Ascending aorta (tissue), 2 donors: ENCODE measurements at regions of chr2 and their contacts with region 1.

Region 1: DNA sequence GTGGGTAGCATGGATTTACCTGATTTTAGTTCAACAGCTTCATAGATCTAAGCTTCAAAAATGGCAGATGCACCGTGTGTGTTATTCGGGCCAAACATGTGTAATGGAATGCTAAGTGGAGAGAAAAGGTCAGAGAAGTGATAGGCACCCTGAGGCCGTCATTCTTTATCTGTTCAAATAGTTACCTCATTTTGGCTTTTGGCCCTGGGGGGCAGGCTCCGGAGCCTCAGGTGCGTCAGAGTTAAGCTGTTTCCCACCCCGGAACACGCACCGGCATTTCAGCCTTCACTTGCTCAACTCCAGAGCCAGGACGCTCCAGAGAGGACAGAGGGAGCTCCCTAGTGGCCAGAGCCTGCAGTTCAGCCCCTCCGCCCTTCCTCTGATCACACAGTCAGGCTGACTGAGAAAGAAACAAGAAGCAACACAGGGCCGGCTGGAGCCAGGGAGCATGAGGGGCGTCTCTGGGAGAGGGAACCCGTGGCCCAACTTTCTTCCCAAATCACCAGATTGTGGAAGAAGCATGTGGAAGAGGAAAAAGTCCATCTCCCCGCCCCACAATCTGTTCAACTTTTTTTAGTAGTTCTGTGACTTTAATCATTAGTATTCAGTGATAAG is 135.2 kb upstream of the EPC2 start:
- DNase-seq: peak; percentile 62 to 92
- H3K4me3 ChIP-seq: peak overlapping the region; percentile 35 to 57
- H3K27ac ChIP-seq: peak overlapping the region in 1 of 2 donors; percentile 52
- H3K4me1 ChIP-seq: peaks cover 0 to 4% of the 10 kb centered on the region in 2 donors
- H3K27me3 ChIP-seq: no peaks in the 10 kb centered on the region
- CTCF ChIP-seq: peak; percentile 85 to 92 (median 90)

Region 2: DNA sequence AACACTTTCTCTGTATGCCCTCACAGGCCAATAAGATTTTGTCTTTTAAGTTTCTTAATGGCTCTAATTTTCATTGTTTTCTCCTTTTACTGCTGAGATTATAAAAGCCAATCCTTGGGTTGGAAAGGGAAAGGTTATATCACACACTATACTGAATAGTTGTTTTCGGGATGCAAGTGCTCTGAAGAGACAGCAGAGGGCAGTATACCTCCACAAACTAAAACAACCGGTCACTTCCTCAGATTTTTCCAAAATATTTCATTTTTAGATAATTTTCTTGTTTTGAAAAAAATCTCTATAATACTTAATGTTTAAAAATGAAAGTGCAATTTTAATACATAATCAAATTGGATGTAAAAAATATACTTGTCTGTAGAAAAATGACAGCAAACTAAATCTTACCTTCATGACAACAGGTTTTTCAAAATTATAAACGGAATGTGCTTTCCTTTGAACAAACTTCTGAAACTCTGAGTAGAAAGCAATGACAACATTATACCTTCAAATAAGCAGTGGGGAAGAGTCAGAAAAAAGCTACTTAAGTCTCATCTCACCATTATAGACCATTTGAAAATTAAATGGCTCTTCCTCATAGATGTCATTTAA is 571.5 kb before region 1 on chr2:
- intact Hi-C with region 1: loop called (anchors 2 kb)
- DNase-seq: no peak
- H3K4me3 ChIP-seq: no peak overlapping the region
- H3K27ac ChIP-seq: no peak overlapping the region
- H3K4me1 ChIP-seq: no peaks in the 10 kb centered on the region
- H3K27me3 ChIP-seq: no peaks in the 10 kb centered on the region
- CTCF ChIP-seq: peak; percentile 46 to 86 (median 80)

Region 3: GRCh38 chr2:147989809-147990403 is 519.5 kb before region 1 on chr2:
- intact Hi-C with region 1: loop called (anchors 2 kb)
- DNase-seq: no peak
- H3K4me3 ChIP-seq: no peak overlapping the region
- H3K27ac ChIP-seq: no peak overlapping the region
- H3K4me1 ChIP-seq: no peaks in the 10 kb centered on the region
- H3K27me3 ChIP-seq: no peaks in the 10 kb centered on the region
- CTCF ChIP-seq: peak; percentile 55 to 62 (median 59)

Region 4: GRCh38 chr2:148020111-148021058 is 489.0 kb before region 1 on chr2 and contains the start of gene ORC4:
- intact Hi-C with region 1: loop called (anchors 1 kb)
- DNase-seq: peak; percentile 91 to 99
- H3K4me3 ChIP-seq: peak within 1 kb of the TSS; percentile 81 to 86
- H3K27ac ChIP-seq: peak within 1 kb of the TSS; percentile 89 to 91
- H3K4me1 ChIP-seq: peaks cover 3 to 15% of the 10 kb centered on the region in 2 donors
- H3K27me3 ChIP-seq: no peaks in the 10 kb centered on the region
- CTCF ChIP-seq: peak in 2 of 3 experiments; percentile 17 to 43
- total RNA-seq, gene ORC4: 79.6 TPM

Region 5: GRCh38 chr2:148130581-148130980 is 378.8 kb before region 1 on chr2:
- intact Hi-C with region 1: loop called (anchors 10 kb)
- DNase-seq: no peak
- H3K4me3 ChIP-seq: no peak overlapping the region
- H3K27ac ChIP-seq: no peak overlapping the region
- H3K4me1 ChIP-seq: peaks cover 0 to 9% of the 10 kb centered on the region in 2 donors
- H3K27me3 ChIP-seq: no peaks in the 10 kb centered on the region
- CTCF ChIP-seq: no peak

Region 6: DNA sequence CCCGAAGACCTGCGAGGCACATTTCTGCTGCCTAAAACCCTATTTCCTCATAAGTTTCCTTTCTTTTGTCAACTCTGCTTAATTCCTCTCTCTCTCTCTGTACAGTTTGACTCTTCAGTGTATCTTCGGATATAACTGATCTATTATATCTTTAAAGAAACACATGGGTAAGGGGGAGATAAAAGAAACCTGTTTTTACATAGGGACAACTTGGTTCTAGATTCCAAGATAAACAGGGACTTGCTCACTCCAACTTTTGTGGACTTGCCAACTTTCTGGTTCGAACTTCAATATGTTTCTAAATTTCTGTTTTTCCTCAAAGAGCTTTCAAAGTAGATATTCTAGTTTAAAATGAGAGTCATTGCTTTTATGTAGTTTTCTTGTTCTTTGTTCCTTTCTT is 47.5 kb before region 1 on chr2:
- intact Hi-C with region 1: loop called (anchors 5 kb)
- DNase-seq: no peak
- H3K4me3 ChIP-seq: peak overlapping the region in 1 of 2 donors; percentile 22
- H3K27ac ChIP-seq: peak overlapping the region; percentile 56 to 64
- H3K4me1 ChIP-seq: peaks cover 0 to 27% of the 10 kb centered on the region in 2 donors
- H3K27me3 ChIP-seq: no peaks in the 10 kb centered on the region
- CTCF ChIP-seq: no peak

Region 7: DNA sequence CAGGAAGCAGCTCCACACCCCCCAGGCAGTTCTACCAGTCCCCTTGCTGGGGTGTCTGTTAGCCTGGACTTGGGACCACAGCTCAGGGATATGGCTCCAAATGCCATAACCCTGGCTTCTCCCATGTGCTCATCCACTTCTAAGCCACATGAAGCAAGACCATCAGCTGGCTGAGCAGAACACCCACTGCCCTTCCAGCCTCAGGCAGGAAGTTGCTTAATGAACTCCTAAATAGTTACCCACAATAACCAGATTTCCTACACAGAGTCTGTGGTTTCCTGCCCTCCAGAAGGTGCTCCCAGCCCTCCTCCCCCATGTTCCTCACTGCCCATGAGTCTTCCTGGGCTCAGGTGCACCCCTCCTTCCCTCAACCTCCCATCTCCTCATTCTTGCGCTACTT is 36.9 kb after region 1 on chr2:
- intact Hi-C with region 1: no loop called
- DNase-seq: no peak
- H3K4me3 ChIP-seq: no peak overlapping the region
- H3K27ac ChIP-seq: no peak overlapping the region
- H3K4me1 ChIP-seq: no peaks in the 10 kb centered on the region
- H3K27me3 ChIP-seq: no peaks in the 10 kb centered on the region
- CTCF ChIP-seq: no peak

Region 8: GRCh38 chr2:148644883-148645538 is 135.6 kb after region 1 on chr2:
- intact Hi-C with region 1: loop called (anchors 2 kb)
- DNase-seq: peak; percentile 75 to 97
- H3K4me3 ChIP-seq: peak overlapping the region; percentile 89 to 98
- H3K27ac ChIP-seq: peak overlapping the region; percentile 99 to 100
- H3K4me1 ChIP-seq: peaks cover 0 to 14% of the 10 kb centered on the region in 2 donors
- H3K27me3 ChIP-seq: no peaks in the 10 kb centered on the region
- CTCF ChIP-seq: peak in 2 of 3 experiments; percentile 23 to 40

Region 9: GRCh38 chr2:149020432-149020851 is 511.0 kb after region 1 on chr2:
- intact Hi-C with region 1: no loop called
- DNase-seq: no peak
- H3K4me3 ChIP-seq: no peak overlapping the region
- H3K27ac ChIP-seq: no peak overlapping the region
- H3K4me1 ChIP-seq: peaks cover 0 to 5% of the 10 kb centered on the region in 2 donors
- H3K27me3 ChIP-seq: no peaks in the 10 kb centered on the region
- CTCF ChIP-seq: no peak